Right ventricle myocardium inferior (tissue), 1 donor: ENCODE measurements at regions of chr14 and their contacts with region 1.

Region 1: DNA sequence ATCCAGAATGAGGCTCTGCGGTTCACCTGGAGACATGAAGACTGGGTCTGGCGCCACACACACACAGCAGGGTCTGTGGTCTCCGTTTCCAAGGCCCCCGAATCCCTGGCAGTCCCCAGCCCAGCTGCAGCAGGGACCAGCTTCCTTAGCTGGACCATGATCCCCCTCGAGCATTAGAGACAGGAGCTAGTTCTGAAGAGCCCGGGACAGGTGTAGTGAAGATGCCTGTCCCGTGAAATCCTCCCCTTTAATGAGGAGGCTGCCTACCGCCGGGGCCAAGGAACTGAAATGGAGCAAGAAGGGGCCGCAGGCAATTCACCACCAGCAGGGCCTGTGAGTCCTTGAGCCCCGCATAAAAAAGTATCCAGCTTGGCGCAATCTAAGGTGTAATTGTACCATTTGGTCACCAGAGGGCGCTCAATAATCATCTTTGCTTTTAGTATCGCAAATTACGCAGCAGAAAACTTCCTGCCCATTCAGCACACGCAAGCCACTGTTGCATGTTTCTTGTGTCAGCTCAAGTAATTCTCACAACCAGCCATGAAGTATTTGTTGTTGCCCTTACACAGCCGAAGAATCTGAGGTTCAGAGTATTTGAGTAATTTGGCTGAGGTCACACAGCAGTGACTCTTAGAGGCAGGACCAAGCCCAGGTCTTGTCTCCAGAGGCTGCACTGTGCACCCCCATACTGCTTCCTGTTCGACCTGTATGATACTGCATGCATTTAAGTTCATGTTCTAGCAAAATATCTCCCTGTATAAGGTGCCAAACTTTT is 54.3 kb upstream of the PPP2R5C start:
- DNase-seq: no peak
- ATAC-seq: peak; percentile 66

Region 2: DNA sequence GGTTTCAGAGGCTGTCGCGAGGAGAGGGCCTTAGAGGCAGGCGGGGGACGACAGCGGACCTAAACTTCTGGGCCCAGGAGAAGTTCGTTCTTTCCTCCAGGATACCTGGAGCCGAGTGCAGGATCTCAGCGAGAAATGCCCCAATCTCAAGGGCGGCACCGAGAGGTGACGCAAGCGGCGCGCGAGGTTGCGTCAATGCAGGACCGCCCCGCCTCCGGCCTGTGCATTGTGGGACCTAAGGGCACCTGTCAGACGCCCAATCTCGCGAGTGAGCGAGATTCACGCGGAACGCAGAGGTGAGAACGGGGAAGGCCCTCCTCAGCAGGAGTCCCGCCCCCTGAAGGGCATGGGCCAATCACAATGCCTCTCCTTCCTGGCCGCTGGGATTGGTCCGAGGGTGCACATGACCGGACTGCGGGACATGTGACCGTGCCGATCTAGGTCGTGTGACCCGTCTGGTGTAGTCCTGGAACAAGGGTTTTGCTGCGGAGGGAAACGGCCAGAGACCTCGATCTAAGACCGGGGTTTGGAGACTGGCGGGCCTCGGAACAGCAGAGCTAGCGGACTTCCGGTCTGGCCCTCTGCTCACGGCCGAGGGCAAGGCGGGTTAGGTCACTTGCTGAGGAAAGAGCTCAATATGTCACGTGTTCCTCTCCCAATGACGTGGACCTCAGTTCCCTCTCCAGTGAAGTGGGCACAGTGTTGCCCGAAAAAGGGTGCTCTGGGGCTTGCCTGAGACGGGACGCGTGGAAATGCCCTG is 240.8 kb after region 1 on chr14:
- intact Hi-C with region 1: loop called (anchors 5 kb)
- DNase-seq: peak; percentile 100
- ATAC-seq: peak; percentile 99

Region 3: DNA sequence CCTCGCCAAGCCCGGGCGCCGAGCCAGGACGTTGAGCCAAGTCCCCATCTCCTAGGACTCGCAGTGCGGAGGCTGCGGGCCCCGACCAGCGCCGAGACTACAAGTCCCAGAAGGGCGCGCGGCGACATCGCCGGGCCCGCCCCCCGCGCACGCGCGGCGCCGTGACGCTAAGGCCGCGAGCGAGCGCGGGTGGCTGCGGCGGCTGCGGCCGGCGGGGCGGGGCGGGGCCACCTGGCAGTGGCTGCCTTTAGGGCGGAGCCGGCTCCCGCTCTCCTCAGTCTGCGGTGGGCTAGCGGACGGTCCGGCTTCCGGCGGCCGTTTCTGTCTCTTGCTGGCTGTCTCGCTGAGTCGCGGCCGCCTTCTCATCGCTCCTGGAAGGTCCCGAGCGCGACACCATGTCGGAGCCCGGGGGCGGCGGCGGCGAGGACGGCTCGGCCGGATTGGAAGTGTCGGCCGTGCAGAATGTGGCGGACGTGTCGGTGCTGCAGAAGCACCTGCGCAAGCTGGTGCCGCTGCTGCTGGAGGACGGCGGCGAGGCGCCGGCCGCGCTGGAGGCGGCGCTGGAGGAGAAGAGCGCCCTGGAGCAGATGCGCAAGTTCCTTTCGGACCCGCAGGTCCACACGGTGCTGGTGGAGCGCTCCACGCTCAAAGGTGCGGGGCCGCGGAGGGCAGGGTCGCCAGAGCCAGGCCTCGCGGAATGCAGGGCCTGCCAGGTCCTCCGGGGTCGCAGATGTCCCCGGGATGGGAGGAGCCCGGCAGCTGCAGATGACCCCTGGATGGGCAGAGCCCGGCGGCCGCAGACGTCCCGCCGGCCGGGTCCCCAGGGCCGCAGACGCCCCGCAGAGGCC is 257.3 kb after region 1 on chr14 and contains the start of gene DYNC1H1:
- intact Hi-C with region 1: loop called (anchors 5 kb)
- DNase-seq: peak; percentile 98
- ATAC-seq: peak; percentile 93
- total RNA-seq, gene DYNC1H1: 348 TPM